ENCODE measurements at regions of chr20 and their contacts with region 1.

Region 1: GRCh38 chr20:237489-237888 is 10.4 kb downstream of the DEFB129 start:
- DNase-seq: peak; percentile 29
- H3K4me3 Mint-ChIP-seq: peak overlapping the region; percentile 67
- H3K27ac Mint-ChIP-seq: peak overlapping the region; percentile 82
- H3K4me1 Mint-ChIP-seq: peaks cover 25% of the 10 kb centered on the region
- H3K27me3 Mint-ChIP-seq: peaks cover 4% of the 10 kb centered on the region

Region 2: GRCh38 chr20:208942-209566 is 28.4 kb before region 1 on chr20:
- intact Hi-C with region 1: loop called (anchors 1 kb)
- DNase-seq: peak; percentile 8
- H3K4me3 Mint-ChIP-seq: no peak overlapping the region
- H3K27ac Mint-ChIP-seq: no peak overlapping the region
- H3K4me1 Mint-ChIP-seq: no peaks in the 10 kb centered on the region
- H3K27me3 Mint-ChIP-seq: peaks cover 10% of the 10 kb centered on the region

Region 3: GRCh38 chr20:362271-363254 is 125.1 kb after region 1 on chr20:
- intact Hi-C with region 1: no loop called
- DNase-seq: no peak
- H3K4me3 Mint-ChIP-seq: no peak overlapping the region
- H3K27ac Mint-ChIP-seq: peak overlapping the region; percentile 62
- H3K4me1 Mint-ChIP-seq: peaks cover 36% of the 10 kb centered on the region
- H3K27me3 Mint-ChIP-seq: no peaks in the 10 kb centered on the region

Region 4: GRCh38 chr20:381581-382290 is 144.2 kb after region 1 on chr20:
- intact Hi-C with region 1: no loop called
- DNase-seq: peak; percentile 75
- H3K4me3 Mint-ChIP-seq: peak overlapping the region; percentile 81
- H3K27ac Mint-ChIP-seq: peak overlapping the region; percentile 68
- H3K4me1 Mint-ChIP-seq: peaks cover 22% of the 10 kb centered on the region
- H3K27me3 Mint-ChIP-seq: peaks cover 3% of the 10 kb centered on the region